HEK293T (cell line): ENCODE measurements at regions of chr1 and their contacts with region 1.

Region 1: DNA sequence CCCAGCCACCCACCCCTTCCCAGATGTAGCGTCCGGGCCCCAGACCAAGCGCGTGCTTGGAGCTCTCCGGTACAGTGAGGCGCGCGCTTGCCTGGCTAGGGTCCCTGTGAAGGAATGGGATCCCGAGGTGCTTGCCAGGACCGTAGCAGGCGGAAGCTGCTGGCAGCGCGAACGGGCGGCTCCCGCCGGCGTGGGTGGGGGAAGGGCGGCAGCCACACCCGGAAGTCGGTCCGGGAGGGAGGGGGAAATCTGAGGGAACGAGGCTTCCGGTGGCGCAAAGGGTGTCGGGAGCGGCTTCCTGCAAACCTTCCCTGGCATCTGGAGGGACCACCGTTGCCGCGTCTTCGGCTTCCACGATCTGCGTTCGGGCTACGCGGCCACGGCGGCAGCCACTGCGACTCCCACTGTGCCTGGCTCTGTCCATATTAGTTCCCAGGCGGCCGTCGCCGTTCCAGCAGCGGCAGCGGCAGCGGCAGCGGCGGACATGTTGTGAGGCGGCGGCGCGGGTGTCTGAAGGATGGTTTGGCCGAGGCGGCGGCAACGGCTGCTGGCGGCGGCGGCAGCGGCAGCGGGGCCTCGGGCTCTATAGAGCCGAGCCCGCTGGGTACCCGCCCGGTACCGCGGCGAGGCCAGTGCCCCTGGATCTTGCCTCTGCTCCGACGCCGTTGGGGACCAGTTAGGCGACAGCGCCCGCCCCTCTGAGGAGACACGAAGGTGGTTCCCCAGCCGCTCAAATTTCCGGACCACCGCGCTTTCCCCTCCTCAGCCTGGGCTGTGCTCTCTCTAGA is at the start of gene DR1:
- DNase-seq: peak; percentile 93

Region 2: DNA sequence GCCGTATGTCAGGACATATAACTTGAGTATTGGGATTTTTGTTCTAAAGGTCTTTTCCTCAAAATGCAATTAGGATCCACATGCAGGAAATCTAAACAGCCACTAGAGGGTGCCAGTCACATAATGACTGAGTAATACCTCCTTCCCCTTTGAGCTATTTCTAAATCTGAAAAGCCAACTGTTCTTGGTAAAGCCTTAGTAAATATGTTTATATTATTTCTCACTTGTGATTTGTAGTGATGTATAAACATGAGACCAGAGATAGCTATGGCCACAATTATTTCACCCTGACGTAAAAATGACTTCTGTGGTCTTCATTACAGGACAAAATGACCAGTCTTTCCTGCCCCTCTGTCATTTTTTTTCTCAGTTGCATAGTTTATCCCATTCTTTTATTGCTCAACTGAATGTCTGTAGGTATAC is 41.1 kb before region 1 on chr1:
- CTCF ChIA-PET with region 1: interaction called, 4 read pairs
- POLR2A ChIA-PET with region 1: interaction called, 11 read pairs
- DNase-seq: peak; percentile 68

Region 3: DNA sequence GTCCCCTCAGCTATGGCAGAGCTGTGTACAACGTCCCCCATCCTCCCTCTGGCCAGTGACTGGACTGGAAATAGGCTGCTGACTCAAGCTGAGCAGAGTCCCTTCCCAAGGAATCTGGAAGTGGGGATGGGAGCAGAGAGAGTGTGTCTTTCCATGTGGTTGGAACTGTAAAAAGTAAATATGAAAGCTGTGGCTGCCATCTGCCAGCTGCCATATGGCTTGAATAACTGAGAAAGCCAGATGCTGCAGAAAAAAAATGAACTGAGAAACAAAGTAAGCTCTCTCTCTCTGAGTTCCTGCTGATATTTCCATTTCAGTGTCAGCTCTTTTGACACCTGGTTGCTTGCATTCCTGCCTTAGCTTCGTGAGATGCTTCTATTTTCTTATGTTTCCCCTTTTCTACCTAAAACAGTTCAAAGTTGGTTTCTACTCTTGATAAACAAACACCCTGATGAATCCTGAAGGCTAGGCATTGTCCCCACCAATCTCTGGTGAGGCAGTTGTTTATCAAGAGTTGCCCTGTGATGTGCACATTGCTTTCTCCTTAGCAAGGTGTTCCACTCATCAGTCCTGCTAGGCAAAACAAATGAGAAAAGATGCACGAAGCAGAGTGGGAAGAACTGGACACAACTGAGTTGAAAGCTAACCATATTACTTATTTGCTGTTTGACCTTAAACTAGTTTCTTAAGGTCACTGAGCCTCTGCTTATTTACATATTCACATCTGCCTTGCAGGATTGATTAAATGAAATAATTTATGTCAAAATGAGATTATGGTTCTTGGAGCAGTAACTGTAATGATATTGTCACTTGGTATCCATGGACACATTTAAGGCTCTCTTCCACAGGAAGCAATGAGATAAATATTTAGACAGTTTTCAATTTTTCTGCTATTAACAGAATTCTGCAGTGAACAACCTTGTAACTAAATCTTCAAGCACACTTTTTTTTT is 16.7 kb before region 1 on chr1:
- CTCF ChIA-PET with region 1: interaction called, 4 read pairs
- POLR2A ChIA-PET with region 1: interaction called, 40 read pairs
- DNase-seq: no peak

Region 4: DNA sequence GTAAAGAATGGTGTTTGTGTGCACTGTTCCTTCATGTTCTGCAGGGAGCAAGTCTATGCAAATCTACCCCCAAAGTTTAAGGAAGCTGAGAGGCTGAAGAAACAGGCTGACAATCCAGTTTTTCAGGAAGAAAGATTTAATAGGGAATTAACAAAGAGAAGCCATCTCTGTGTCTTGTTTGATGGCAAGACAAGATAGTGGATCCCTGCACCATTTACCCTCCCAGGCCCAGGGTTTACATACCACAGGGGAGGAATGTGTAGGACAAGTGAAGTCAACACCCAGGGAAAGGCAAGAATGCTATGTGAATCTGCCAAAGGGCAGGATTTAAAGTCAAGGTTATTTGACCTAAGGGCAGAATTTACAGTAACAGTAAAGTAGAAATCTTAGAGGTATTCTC is 54.0 kb after region 1 on chr1:
- CTCF ChIA-PET with region 1: no interaction called
- POLR2A ChIA-PET with region 1: no interaction called
- DNase-seq: no peak

Region 5: DNA sequence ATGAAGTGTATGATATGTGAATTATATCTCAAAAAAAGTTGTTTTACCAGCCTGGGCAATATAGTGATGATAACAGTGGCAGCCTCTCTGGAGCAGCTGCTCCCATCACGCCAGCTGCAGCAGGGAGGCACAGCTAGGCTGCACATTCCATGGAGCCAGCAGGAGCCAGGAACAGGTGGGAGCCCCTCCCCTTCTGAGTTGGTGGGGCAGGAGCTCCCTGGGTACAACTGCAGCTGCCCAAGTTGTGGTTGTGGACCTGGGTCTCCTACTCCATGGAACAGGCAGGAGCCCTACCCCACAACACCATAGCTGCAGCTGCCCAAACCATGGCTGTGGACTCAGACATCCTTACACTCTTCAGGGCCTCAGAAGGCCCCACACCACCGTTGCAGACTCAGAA is 80.4 kb after region 1 on chr1:
- CTCF ChIA-PET with region 1: no interaction called
- POLR2A ChIA-PET with region 1: no interaction called
- DNase-seq: no peak